ENCODE measurements at regions of chr2 and their contacts with region 1.

Region 1: GRCh38 chr2:219160186-219161017 is at the start of gene NHEJ1:
- DNase-seq: peak; percentile 95 to 98 (median 96)
- ATAC-seq: peak; percentile 96 to 98 (median 98)
- H3K4me3 ChIP-seq: peak within 1 kb of the TSS; percentile 42 to 88 (median 68)
- H3K27ac ChIP-seq: peak within 1 kb of the TSS; percentile 88 to 99 (median 95)
- H3K4me1 ChIP-seq: peaks cover 0 to 15% (median 10%) of the 10 kb centered on the region in 12 donors
- H3K27me3 ChIP-seq: no peaks in the 10 kb centered on the region
- CTCF ChIP-seq: peak; percentile 98 to 100 (median 99)
- POLR2A ChIP-seq: peak in 1 of 2 donors; percentile 64
- total RNA-seq, gene NHEJ1: 4.6 to 13.2 (median 8.0) TPM

Region 2: DNA sequence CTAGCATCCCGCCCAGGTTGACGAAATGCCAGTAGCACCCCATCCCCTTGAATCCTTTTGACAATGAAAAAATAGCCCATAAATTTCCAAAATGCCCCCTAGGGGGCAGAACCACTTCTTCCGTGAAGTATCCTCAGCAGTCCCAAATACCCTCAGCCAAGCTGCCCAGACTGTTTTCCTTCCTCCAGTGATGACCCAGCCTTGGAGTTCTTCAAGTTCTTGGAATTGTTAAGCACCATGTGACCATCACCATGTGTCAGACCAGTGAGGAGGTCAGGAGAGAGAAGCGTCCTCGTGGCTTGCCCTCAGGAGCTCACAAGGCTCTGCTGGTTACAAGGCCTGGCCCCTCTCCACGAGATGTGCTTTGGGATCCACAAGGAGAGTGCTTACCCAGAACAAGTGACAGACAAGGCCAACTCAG is 10.8 kb after region 1 on chr2:
- intact Hi-C with region 1: loop called in 2 of 10 experiments (anchors 1 to 2 kb)
- DNase-seq: peak in 3 of 5 donors; percentile 27 to 40 (median 29)
- ATAC-seq: peak; percentile 53 to 71 (median 62)
- H3K4me3 ChIP-seq: no peak overlapping the region
- H3K27ac ChIP-seq: peak overlapping the region in 8 of 12 donors; percentile 29 to 80 (median 51)
- H3K4me1 ChIP-seq: peaks cover 0 to 35% (median 22%) of the 10 kb centered on the region in 12 donors
- H3K27me3 ChIP-seq: no peaks in the 10 kb centered on the region
- CTCF ChIP-seq: peak; percentile 54 to 77 (median 68)
- POLR2A ChIP-seq: no peak

Region 3: GRCh38 chr2:219388127-219388844 is 227.9 kb after region 1 on chr2:
- intact Hi-C with region 1: loop called in 3 of 10 experiments (anchors 10 kb)
- DNase-seq: peak; percentile 99 to 100 (median 99)
- ATAC-seq: peak; percentile 83 to 92 (median 88)
- H3K4me3 ChIP-seq: peak overlapping the region in 10 of 12 donors; percentile 20 to 95 (median 78)
- H3K27ac ChIP-seq: peak overlapping the region; percentile 77 to 99 (median 89)
- H3K4me1 ChIP-seq: peaks cover 0 to 19% (median 11%) of the 10 kb centered on the region in 12 donors
- H3K27me3 ChIP-seq: no peaks in the 10 kb centered on the region
- CTCF ChIP-seq: peak; percentile 40 to 87 (median 74)
- POLR2A ChIP-seq: peak in 1 of 2 donors; percentile 40

Measured in heart left ventricle (tissue), 16 donors.